Motor neuron (in vitro differentiated cells): ENCODE measurements at regions of chr20 and their contacts with region 1.

Region 1: GRCh38 chr20:4592316-4593148 is 129.2 kb upstream of the PRND start:
- ATAC-seq: peak; percentile 92 to 98 (median 96)
- H3K4me3 ChIP-seq: peak overlapping the region in 3 of 5 donors; percentile 19 to 29 (median 21)
- H3K27ac ChIP-seq: no peak overlapping the region
- H3K4me1 ChIP-seq: peaks cover 0 to 2% of the 10 kb centered on the region in 2 donors

Region 2: DNA sequence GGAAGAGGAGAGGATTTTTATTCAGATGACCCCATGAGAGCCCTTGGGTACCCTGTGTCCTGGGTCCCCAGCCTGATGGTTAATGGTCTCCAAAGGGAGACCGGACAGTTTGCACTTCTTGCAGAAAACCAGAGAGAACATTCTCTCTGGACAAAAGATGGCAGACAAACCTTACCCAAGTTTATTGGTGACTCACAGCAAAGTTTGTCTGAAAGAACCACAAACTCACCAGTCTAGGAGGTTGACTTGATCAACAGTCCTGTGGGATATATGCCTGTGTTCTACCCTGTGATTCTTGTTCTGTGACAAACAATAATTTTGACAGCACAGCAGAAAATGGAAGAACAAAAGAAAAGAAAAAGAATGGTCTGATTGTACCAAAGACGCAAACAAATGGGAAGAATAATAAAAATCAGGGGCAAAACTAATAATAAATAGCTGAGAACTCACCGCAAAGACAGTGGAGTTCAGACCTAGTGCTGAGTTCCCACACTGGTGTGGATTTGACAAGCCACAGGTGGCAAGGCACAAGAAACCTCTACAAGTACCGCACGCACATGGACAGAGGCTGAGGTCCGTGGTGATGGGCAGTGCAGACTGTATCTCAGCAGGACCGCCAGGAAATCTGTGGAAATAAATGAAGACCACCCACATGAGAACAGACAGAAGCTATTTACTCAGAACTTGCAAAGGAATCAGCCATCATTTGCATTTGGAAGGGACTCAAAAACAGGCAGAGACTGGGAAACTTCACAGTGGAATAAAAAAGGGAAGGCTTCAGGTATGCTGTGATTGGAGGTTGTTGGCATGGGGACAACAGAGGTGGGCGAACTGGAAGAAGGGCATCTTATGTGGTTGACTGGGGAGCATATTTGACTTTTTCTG is 331.0 kb before region 1 on chr20:
- in situ Hi-C with region 1: loop called in 2 of 9 experiments (anchors 25 kb)
- ATAC-seq: no peak
- H3K4me3 ChIP-seq: no peak overlapping the region
- H3K27ac ChIP-seq: no peak overlapping the region
- H3K4me1 ChIP-seq: no peaks in the 10 kb centered on the region